IMR-90 (cell line): ENCODE measurements at regions of chr9 and their contacts with region 1.

Region 1: GRCh38 chr9:34637356-34638137 is at the start of gene SIGMAR1:
- DNase-seq: peak; percentile 89
- ATAC-seq: peak; percentile 97
- H3K4me3 ChIP-seq: peak within 1 kb of the TSS; percentile 84
- H3K27ac ChIP-seq: peak within 1 kb of the TSS; percentile 82
- H3K4me1 ChIP-seq: peaks cover 4% of the 10 kb centered on the region
- H3K27me3 ChIP-seq: no peaks in the 10 kb centered on the region
- CTCF ChIP-seq: no peak
- POLR2A ChIP-seq: no peak
- RAD21 ChIP-seq: no peak
- total RNA-seq, gene SIGMAR1: 38.6 and 44.6 TPM in 2 replicates

Region 2: GRCh38 chr9:34611829-34612630 is 25.5 kb before region 1 on chr9 and contains the start of gene RPP25L:
- CTCF ChIA-PET with region 1: interaction called, 3 read pairs
- POLR2A ChIA-PET with region 1: no interaction called
- dilution Hi-C with region 1: no loop called
- in situ Hi-C with region 1: no loop called
- intact Hi-C with region 1: loop called (anchors 1 kb)
- DNase-seq: peak; percentile 78
- ATAC-seq: peak; percentile 99
- H3K4me3 ChIP-seq: peak within 1 kb of the TSS; percentile 69
- H3K27ac ChIP-seq: peak within 1 kb of the TSS; percentile 74
- H3K4me1 ChIP-seq: peaks cover 6% of the 10 kb centered on the region; the same call in 1 of the 2 replicates
- H3K27me3 ChIP-seq: no peaks in the 10 kb centered on the region
- CTCF ChIP-seq: no peak
- POLR2A ChIP-seq: peak; percentile 72
- RAD21 ChIP-seq: no peak
- total RNA-seq, gene RPP25L: 13.3 and 20.4 TPM in 2 replicates

Region 3: GRCh38 chr9:34620061-34620994 is 17.2 kb before region 1 on chr9 and contains the start of gene DCTN3:
- CTCF ChIA-PET with region 1: interaction called, 16 read pairs
- POLR2A ChIA-PET with region 1: no interaction called
- dilution Hi-C with region 1: no loop called
- in situ Hi-C with region 1: no loop called
- intact Hi-C with region 1: no loop called
- DNase-seq: peak; percentile 94
- ATAC-seq: peak; percentile 99
- H3K4me3 ChIP-seq: peak within 1 kb of the TSS; percentile 67
- H3K27ac ChIP-seq: peak within 1 kb of the TSS; percentile 20; the same call in 1 of the 2 replicates
- H3K4me1 ChIP-seq: peaks cover 5% of the 10 kb centered on the region; the same call in 1 of the 2 replicates
- H3K27me3 ChIP-seq: peaks cover 27% of the 10 kb centered on the region
- CTCF ChIP-seq: no peak
- POLR2A ChIP-seq: peak; percentile 61; the same call in 1 of the 2 replicates
- RAD21 ChIP-seq: no peak
- total RNA-seq, gene DCTN3: 104 and 122 TPM in 2 replicates